AG04450 (cell line): ENCODE measurements at regions of chr1 and their contacts with region 1.

Region 1: DNA sequence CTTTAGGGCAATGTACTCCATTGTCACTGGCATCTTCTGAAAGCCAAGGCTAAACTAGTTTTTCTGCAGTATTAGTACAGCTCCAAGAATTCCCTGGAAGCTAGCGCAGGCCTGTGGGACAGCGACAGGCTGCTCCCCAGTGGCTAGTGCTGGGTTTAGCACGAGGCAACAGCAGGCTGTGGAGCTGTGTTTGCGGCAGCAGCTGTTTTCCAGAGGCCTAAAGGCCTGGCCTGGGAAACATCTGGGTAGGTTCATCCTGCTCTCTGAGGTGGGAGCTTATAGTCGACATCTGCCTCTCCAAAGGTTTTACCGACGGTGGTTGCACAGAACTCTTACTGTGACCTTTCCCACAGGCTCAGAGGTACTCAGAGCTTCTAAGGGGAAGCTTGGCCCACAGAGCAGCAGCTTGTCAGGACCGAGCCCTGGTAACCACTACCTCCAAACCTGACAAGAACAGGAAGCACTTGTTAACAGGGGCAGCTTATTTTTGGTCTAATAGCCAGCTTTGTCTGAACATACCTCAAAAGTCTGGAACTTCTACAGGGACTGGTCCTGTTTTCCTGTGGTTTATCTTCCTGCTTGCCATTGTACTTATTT is 17.2 kb downstream of the CC2D1B start:
- DNase-seq: no peak
- H3K4me3 ChIP-seq: no peak overlapping the region
- H3K27ac ChIP-seq: peak overlapping the region; percentile 12
- H3K27me3 ChIP-seq: no peaks in the 10 kb centered on the region
- CTCF ChIP-seq: peak; percentile 51

Region 2: DNA sequence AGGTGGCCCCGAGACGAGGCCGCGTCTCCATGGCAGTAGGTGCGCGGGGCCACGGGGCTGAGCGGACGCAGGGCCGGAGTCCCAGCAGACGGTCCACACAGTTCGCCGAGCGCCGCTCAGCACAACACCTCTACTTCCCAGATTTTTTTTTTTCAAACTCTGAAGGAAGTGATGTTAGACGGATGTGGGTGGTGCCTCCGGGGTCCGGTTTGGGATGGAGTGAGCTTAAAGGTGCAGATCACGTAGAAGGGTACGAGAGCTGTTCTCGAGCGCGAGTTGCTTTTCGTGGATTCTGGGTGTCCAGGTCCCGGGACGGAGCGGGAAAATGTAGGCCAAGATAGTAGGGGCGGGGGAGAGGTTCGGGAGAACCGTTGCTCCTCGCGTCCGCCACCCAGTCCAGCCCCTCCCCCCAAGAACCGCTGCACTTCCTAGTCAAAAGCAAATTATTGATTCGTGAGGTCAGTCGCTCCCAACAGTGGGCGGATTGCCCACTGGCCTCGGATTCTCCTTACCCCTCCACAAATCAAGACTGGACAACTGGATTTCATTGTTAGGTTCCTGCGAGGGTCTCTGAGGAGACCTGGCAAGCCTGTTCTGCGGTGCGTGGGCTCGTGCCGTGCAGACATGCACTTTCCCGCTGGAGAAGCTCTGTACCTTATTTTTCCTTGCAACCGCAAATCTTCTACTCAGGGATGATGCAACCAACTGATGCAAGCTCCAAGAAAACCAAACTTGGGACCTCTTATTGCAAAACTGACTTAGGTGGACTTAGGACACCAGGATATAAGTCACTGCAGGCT is 293.5 kb before region 1 on chr1 and contains the start of gene TXNDC12:
- CTCF ChIA-PET with region 1: interaction called, 4 read pairs
- POLR2A ChIA-PET with region 1: interaction called, 12 read pairs
- DNase-seq: peak; percentile 75
- H3K4me3 ChIP-seq: peak within 1 kb of the TSS; percentile 90
- H3K27ac ChIP-seq: peak within 1 kb of the TSS; percentile 97
- H3K27me3 ChIP-seq: no peaks in the 10 kb centered on the region
- CTCF ChIP-seq: no peak
- polyA plus RNA-seq, gene TXNDC12: 39.8 and 55.8 TPM in 2 replicates

Region 3: GRCh38 chr1:52127181-52128180 is 221.3 kb before region 1 on chr1:
- CTCF ChIA-PET with region 1: interaction called, 37 read pairs
- POLR2A ChIA-PET with region 1: no interaction called
- DNase-seq: peak; percentile 44
- H3K4me3 ChIP-seq: no peak overlapping the region
- H3K27ac ChIP-seq: no peak overlapping the region
- H3K27me3 ChIP-seq: peaks cover 4% of the 10 kb centered on the region
- CTCF ChIP-seq: peak; percentile 82